Endothelial cell of umbilical vein (primary cell): ENCODE measurements at regions of chr11 and their contacts with region 1.

Region 1: DNA sequence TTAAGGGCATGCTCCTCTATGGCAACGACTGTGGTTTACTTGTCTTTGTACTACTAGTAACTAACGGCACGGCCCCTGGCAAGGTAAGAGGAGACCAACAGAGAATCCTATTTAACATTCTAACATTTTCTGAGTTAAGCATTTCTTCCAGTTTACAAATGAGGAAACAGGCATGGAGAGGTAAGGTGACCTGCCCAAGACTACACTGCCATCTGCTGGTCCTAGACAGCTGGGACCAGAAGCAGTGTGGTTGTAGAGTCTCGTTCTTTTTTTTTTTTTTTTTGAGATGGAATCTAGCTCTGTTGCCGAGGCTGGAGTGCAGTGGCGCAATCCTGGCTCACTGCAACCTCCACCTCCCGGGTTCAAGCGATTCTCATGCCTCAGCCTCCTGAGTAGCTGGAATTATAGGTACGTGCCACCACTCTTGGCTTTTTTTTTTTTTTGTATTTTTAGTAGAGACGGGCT is 5.3 kb upstream of the RAPSN start:
- DNase-seq: peak; percentile 75
- H3K4me3 ChIP-seq: no peak overlapping the region
- H3K27ac ChIP-seq: no peak overlapping the region
- H3K4me1 ChIP-seq: no peaks in the 10 kb centered on the region
- H3K27me3 ChIP-seq: no peaks in the 10 kb centered on the region
- CTCF ChIP-seq: peak; percentile 68 to 82
- POLR2A ChIP-seq: no peak

Region 2: DNA sequence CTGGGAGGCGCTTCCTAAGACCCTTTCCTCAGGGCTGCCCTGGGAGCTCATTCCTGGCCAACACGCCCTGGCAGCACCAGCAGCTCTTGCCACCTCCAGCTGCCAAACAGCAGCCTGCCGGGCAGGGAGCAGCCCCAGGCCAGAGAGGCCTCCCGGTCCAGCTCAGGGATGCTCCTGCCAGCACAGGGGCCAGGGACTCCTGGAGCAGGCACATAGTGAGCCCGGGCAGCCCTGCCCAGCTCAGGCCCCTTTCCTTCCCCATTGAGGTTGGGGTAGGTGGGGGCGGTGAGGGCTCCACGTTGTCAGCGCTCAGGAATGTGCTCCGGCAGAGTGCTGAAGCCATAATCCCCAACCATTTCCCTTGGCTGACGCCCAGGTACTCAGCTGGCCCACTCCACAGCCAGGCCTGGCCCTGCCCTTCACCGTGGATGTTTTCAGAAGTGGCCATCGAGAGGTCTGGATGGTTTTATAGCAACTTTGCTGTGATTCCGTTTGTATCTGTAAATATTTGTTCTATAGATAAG is 38.2 kb before region 1 on chr11:
- CTCF ChIA-PET with region 1: interaction called, 11 read pairs
- POLR2A ChIA-PET with region 1: no interaction called
- dilution Hi-C with region 1: no loop called
- intact Hi-C with region 1: no loop called
- DNase-seq: peak; percentile 88
- H3K4me3 ChIP-seq: no peak overlapping the region
- H3K27ac ChIP-seq: peak overlapping the region; percentile 51
- H3K4me1 ChIP-seq: peaks cover 16% of the 10 kb centered on the region
- H3K27me3 ChIP-seq: no peaks in the 10 kb centered on the region
- CTCF ChIP-seq: no peak
- POLR2A ChIP-seq: peak; percentile 76

Region 3: GRCh38 chr11:47426061-47426956 is 27.9 kb before region 1 on chr11 and contains the start of gene PSMC3:
- CTCF ChIA-PET with region 1: interaction called, 15 read pairs
- POLR2A ChIA-PET with region 1: no interaction called
- dilution Hi-C with region 1: no loop called
- intact Hi-C with region 1: no loop called
- DNase-seq: peak; percentile 97
- H3K4me3 ChIP-seq: peak within 1 kb of the TSS; percentile 68 to 89 (median 79)
- H3K27ac ChIP-seq: peak within 1 kb of the TSS; percentile 90
- H3K4me1 ChIP-seq: peaks cover 10% of the 10 kb centered on the region
- H3K27me3 ChIP-seq: no peaks in the 10 kb centered on the region
- CTCF ChIP-seq: no peak
- POLR2A ChIP-seq: peak; percentile 80
- total RNA-seq, gene PSMC3: 202 and 203 TPM in 2 replicates

Region 4: GRCh38 chr11:47443042-47443700 is 11.0 kb before region 1 on chr11:
- CTCF ChIA-PET with region 1: interaction called, 13 read pairs
- POLR2A ChIA-PET with region 1: interaction called, 9 read pairs
- dilution Hi-C with region 1: no loop called
- intact Hi-C with region 1: no loop called
- DNase-seq: no peak
- H3K4me3 ChIP-seq: no peak overlapping the region
- H3K27ac ChIP-seq: no peak overlapping the region
- H3K4me1 ChIP-seq: no peaks in the 10 kb centered on the region
- H3K27me3 ChIP-seq: no peaks in the 10 kb centered on the region
- CTCF ChIP-seq: no peak
- POLR2A ChIP-seq: no peak

Region 5: GRCh38 chr11:47466701-47467250 is 12.6 kb after region 1 on chr11:
- CTCF ChIA-PET with region 1: interaction called, 10 read pairs
- POLR2A ChIA-PET with region 1: no interaction called
- dilution Hi-C with region 1: no loop called
- intact Hi-C with region 1: no loop called
- DNase-seq: peak; percentile 80
- H3K4me3 ChIP-seq: peak overlapping the region in 1 of 3 experiments; percentile 10
- H3K27ac ChIP-seq: peak overlapping the region; percentile 36
- H3K4me1 ChIP-seq: peaks cover 37% of the 10 kb centered on the region
- H3K27me3 ChIP-seq: no peaks in the 10 kb centered on the region
- CTCF ChIP-seq: no peak
- POLR2A ChIP-seq: no peak